ENCODE measurements at regions of chr9 and their contacts with region 1.

Region 1: GRCh38 chr9:109469646-109470358 is 28.3 kb downstream of the PTPN3 start:
- DNase-seq: peak; percentile 77
- H3K4me3 Mint-ChIP-seq: no peak overlapping the region
- H3K27ac Mint-ChIP-seq: no peak overlapping the region
- H3K4me1 Mint-ChIP-seq: peaks cover 20% of the 10 kb centered on the region
- H3K27me3 Mint-ChIP-seq: peaks cover 23% of the 10 kb centered on the region

Region 2: DNA sequence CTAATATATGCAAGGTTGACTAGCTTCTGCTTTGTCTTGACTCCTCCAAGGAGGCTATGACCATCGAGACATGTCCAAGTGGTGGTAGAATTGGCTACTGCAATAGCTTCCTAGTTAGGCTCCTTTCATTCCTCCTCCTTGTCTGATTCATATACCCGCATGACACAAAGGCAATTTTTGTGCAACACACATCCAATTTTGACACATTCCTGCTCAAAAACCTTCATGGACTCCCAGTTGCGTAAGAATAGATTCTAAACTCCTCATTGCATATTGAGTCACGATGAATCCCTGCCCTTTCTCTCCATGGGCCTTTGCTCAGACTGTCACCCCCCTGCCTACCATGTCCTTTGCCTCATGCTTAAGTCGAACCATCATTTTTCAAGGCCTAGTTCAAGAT is 958.5 kb before region 1 on chr9:
- CTCF ChIA-PET with region 1: no interaction called
- POLR2A ChIA-PET with region 1: no interaction called
- DNase-seq: no peak
- H3K4me3 Mint-ChIP-seq: no peak overlapping the region
- H3K27ac Mint-ChIP-seq: no peak overlapping the region
- H3K4me1 Mint-ChIP-seq: no peaks in the 10 kb centered on the region
- H3K27me3 Mint-ChIP-seq: no peaks in the 10 kb centered on the region

Region 3: DNA sequence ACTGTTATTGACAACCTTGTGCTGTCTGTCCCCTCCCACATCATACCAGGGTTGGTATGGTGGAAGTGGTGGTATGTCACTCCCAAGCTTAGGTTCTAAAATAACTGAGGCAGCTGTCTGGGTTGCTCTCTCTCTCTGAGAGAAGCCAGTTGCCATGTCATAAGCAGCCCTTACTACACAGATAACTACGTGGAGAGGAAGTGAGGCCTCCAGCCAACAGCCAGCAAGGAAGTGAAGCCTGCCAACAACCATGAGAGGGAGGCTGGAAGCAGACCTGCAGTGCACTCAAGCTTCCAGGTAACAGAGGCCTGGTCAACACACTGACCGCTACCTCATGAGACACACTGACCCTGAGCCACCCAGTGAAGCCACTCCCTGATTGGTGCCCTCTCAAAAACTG is 475.1 kb before region 1 on chr9:
- CTCF ChIA-PET with region 1: no interaction called
- POLR2A ChIA-PET with region 1: no interaction called
- DNase-seq: peak; percentile 8
- H3K4me3 Mint-ChIP-seq: no peak overlapping the region
- H3K27ac Mint-ChIP-seq: no peak overlapping the region
- H3K4me1 Mint-ChIP-seq: peaks cover 13% of the 10 kb centered on the region
- H3K27me3 Mint-ChIP-seq: no peaks in the 10 kb centered on the region

Region 4: GRCh38 chr9:109206670-109207069 is 263.1 kb before region 1 on chr9:
- CTCF ChIA-PET with region 1: no interaction called
- POLR2A ChIA-PET with region 1: no interaction called
- DNase-seq: no peak
- H3K4me3 Mint-ChIP-seq: no peak overlapping the region
- H3K27ac Mint-ChIP-seq: no peak overlapping the region
- H3K4me1 Mint-ChIP-seq: no peaks in the 10 kb centered on the region
- H3K27me3 Mint-ChIP-seq: peaks cover 18% of the 10 kb centered on the region

Region 5: DNA sequence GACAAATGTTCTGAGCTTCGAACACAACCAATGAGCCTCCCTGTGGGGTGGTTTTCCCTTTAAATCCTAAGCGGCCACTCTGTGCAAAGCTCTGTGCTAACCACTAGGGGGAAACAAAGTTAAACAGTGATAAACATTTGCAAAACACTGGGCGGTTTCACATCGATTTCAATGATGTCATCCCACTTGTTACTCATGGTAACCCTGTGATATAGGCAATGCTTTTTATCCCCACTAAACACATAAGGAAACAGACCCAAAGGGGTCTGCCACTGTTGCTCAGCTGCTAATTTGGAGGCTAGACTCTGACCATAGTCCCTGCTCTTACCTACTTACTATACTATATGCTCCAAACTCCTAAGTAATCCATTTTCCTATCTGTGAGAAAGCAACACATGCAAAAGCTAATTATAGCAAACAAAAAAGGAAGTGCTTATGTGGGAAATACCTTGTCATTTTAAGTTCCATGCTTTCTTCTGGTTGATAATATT is 29.0 kb before region 1 on chr9:
- CTCF ChIA-PET with region 1: interaction called, 52 read pairs
- POLR2A ChIA-PET with region 1: interaction called, 4 read pairs
- DNase-seq: peak; percentile 73
- H3K4me3 Mint-ChIP-seq: no peak overlapping the region
- H3K27ac Mint-ChIP-seq: no peak overlapping the region
- H3K4me1 Mint-ChIP-seq: peaks cover 21% of the 10 kb centered on the region
- H3K27me3 Mint-ChIP-seq: peaks cover 31% of the 10 kb centered on the region

Region 6: DNA sequence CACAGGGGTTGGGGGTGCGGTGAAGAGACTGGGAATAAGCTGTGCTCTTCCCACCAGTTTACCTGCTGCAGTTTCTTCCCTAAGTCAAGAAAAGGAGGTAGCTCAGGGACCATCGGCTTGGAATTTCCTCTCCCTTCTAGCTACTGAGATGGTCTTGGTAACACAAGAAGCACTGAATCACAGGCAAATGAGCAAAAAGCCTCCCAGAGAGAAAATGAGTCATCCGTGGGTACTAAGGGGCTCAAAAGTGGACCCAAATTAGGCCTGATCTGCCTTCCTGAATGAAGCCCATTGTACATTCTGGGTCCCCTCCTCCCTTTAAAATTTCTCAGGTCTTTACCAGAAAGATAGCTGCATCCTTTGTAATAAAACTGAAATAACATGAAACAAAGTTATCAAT is 21.6 kb before region 1 on chr9:
- CTCF ChIA-PET with region 1: interaction called, 52 read pairs
- POLR2A ChIA-PET with region 1: no interaction called
- DNase-seq: no peak
- H3K4me3 Mint-ChIP-seq: no peak overlapping the region
- H3K27ac Mint-ChIP-seq: no peak overlapping the region
- H3K4me1 Mint-ChIP-seq: peaks cover 20% of the 10 kb centered on the region
- H3K27me3 Mint-ChIP-seq: peaks cover 16% of the 10 kb centered on the region

Region 7: GRCh38 chr9:109453210-109453842 is 16.5 kb before region 1 on chr9:
- CTCF ChIA-PET with region 1: interaction called, 10 read pairs
- POLR2A ChIA-PET with region 1: interaction called, 3 read pairs
- DNase-seq: no peak
- H3K4me3 Mint-ChIP-seq: no peak overlapping the region
- H3K27ac Mint-ChIP-seq: no peak overlapping the region
- H3K4me1 Mint-ChIP-seq: peaks cover 4% of the 10 kb centered on the region
- H3K27me3 Mint-ChIP-seq: peaks cover 33% of the 10 kb centered on the region